ENCODE measurements at regions of chr10 and their contacts with region 1.

Region 1: GRCh38 chr10:24851629-24852028 is 100.8 kb downstream of the PRTFDC1 start:
- DNase-seq: peak; percentile 96
- H3K4me3 ChIP-seq: no peak overlapping the region
- H3K27ac ChIP-seq: peak overlapping the region; percentile 37
- H3K4me1 ChIP-seq: peaks cover 30% of the 10 kb centered on the region
- H3K27me3 ChIP-seq: no peaks in the 10 kb centered on the region
- CTCF ChIP-seq: no peak
- POLR2A ChIP-seq: no peak

Region 2: GRCh38 chr10:24617771-24618391 is 233.7 kb before region 1 on chr10:
- CTCF ChIA-PET with region 1: interaction called, 10 read pairs
- POLR2A ChIA-PET with region 1: no interaction called
- dilution Hi-C with region 1: no loop called
- intact Hi-C with region 1: no loop called
- DNase-seq: peak; percentile 59
- H3K4me3 ChIP-seq: no peak overlapping the region
- H3K27ac ChIP-seq: no peak overlapping the region
- H3K4me1 ChIP-seq: no peaks in the 10 kb centered on the region
- H3K27me3 ChIP-seq: no peaks in the 10 kb centered on the region
- CTCF ChIP-seq: peak; percentile 82 to 87
- POLR2A ChIP-seq: no peak

Region 3: DNA sequence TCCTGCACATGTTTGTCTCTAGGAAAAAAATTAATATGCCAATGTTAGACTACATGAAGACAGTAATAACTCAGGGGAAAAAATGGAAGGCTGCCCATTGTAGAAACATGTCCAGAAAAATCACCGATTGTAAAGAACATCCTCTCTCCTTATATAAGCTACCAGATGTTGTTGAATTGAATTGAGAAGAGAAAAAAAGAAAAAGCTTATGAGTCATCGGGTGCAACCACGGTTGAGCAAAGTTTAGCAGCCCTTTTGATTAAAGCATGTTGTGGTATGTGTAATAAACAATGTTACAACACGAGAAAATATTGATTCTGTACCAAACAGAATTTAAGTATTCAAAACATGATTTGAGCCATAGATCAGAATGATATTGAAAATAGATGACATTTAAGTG is 25.6 kb before region 1 on chr10:
- CTCF ChIA-PET with region 1: interaction called, 12 read pairs
- POLR2A ChIA-PET with region 1: no interaction called
- dilution Hi-C with region 1: no loop called
- intact Hi-C with region 1: no loop called
- DNase-seq: peak; percentile 79
- H3K4me3 ChIP-seq: peak overlapping the region in 1 of 3 experiments; percentile 35
- H3K27ac ChIP-seq: no peak overlapping the region
- H3K4me1 ChIP-seq: peaks cover 8% of the 10 kb centered on the region
- H3K27me3 ChIP-seq: no peaks in the 10 kb centered on the region
- CTCF ChIP-seq: no peak
- POLR2A ChIP-seq: no peak

Region 4: GRCh38 chr10:24894309-24894708 is 42.7 kb after region 1 on chr10:
- CTCF ChIA-PET with region 1: interaction called, 3 read pairs
- POLR2A ChIA-PET with region 1: no interaction called
- dilution Hi-C with region 1: no loop called
- intact Hi-C with region 1: loop called (anchors 5 kb)
- DNase-seq: peak; percentile 52
- H3K4me3 ChIP-seq: no peak overlapping the region
- H3K27ac ChIP-seq: no peak overlapping the region
- H3K4me1 ChIP-seq: peaks cover 26% of the 10 kb centered on the region
- H3K27me3 ChIP-seq: no peaks in the 10 kb centered on the region
- CTCF ChIP-seq: no peak
- POLR2A ChIP-seq: no peak

Region 5: DNA sequence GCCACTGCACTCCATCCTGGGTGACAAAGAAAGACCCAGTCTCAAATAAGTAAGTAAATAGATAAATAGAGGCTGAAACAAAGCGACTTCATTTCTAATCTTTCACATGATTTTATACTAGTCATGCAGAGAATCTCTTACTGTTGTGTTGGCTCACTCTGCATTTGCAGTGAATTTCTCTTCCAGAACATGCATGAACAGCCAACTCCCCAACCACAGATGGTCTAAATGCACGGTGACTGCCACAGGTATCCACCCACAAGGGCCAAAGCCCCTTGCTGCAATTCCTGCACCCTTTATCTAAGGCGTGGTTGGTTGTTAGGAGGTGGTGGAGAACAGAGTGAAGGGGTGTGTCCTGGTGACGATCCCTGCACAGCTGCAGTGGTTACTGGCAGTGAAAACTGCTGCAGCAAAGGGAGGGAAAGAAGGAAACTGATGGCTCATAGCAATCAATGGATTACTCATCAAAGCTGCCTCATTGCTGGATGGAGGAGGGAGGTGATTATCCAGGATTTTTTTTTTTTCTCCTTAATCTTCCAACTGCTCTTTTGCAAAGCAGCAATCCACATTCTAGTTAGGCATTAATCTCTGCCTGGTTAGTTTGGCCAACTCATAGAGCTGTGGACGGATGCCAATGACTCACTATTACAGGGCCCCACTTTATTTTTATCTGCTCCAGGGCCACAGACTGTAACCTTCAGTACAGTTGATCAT is 50.2 kb after region 1 on chr10:
- CTCF ChIA-PET with region 1: no interaction called
- POLR2A ChIA-PET with region 1: no interaction called
- dilution Hi-C with region 1: no loop called
- intact Hi-C with region 1: loop called (anchors 2 kb)
- DNase-seq: peak; percentile 75
- H3K4me3 ChIP-seq: no peak overlapping the region
- H3K27ac ChIP-seq: no peak overlapping the region
- H3K4me1 ChIP-seq: peaks cover 27% of the 10 kb centered on the region
- H3K27me3 ChIP-seq: no peaks in the 10 kb centered on the region
- CTCF ChIP-seq: no peak
- POLR2A ChIP-seq: no peak

Region 6: GRCh38 chr10:25026463-25026862 is 174.8 kb after region 1 on chr10:
- CTCF ChIA-PET with region 1: no interaction called
- POLR2A ChIA-PET with region 1: no interaction called
- dilution Hi-C with region 1: no loop called
- intact Hi-C with region 1: loop called (anchors 2 kb)
- DNase-seq: peak; percentile 49
- H3K4me3 ChIP-seq: no peak overlapping the region
- H3K27ac ChIP-seq: no peak overlapping the region
- H3K4me1 ChIP-seq: peaks cover 24% of the 10 kb centered on the region
- H3K27me3 ChIP-seq: no peaks in the 10 kb centered on the region
- CTCF ChIP-seq: peak; percentile 17 to 18
- POLR2A ChIP-seq: no peak

Measured in endothelial cell of umbilical vein (primary cell).